ENCODE measurements at regions of chr4 and their contacts with region 1.

Region 1: DNA sequence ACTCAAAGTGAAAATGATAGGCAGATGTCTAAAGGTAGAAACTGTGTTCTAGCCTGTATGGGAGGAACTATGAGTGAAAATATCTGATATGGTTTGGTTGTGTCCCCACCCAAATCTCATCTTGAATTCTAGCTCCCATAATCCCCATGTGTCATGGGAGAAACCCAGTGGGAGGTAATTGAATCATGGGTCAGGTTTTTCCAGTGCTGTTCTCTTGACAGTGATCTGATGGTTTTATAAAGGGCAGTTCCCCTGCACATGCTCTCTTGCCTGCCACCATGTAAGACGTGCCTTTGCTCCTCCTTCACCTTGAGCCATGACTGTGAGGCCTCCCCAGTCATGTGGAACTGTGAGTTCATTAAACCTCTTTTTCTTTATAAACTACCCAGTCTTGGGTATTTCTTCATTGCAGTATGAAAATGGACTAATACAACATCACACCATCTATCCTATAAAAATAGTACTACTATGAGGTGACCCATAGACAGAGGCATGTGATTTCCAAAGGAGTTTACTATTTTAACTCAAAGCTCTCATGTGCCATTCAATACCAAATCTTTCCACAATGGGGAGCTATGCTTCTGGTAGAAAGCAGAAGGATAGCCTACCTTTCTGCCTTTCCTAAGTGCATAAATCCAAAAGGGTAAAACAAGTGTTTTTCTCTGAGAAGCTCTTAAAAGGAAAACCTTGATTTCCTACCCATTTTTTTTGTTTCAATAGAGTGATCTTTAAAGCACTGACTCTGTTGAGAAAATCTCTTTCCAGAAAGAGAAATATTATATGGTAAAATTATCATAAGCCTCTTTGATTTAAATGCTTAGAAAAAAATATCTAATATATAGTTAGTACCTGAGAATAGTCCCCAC is 38.8 kb downstream of the SEC31A start:
- DNase-seq: peak in 1 of 2 experiments; percentile 46
- ATAC-seq: peak; percentile 71 to 72; a peak in 5 of 6 replicates
- H3K4me3 ChIP-seq: no peak overlapping the region
- H3K27ac ChIP-seq: no peak overlapping the region
- H3K4me1 ChIP-seq: no peaks in the 10 kb centered on the region
- CTCF ChIP-seq: peak; percentile 31
- EP300 ChIP-seq: no peak
- POLR2A ChIP-seq: no peak
- RAD21 ChIP-seq: peak in 1 of 2 experiments; percentile 42; a peak in 3 of 5 replicates

Region 2: DNA sequence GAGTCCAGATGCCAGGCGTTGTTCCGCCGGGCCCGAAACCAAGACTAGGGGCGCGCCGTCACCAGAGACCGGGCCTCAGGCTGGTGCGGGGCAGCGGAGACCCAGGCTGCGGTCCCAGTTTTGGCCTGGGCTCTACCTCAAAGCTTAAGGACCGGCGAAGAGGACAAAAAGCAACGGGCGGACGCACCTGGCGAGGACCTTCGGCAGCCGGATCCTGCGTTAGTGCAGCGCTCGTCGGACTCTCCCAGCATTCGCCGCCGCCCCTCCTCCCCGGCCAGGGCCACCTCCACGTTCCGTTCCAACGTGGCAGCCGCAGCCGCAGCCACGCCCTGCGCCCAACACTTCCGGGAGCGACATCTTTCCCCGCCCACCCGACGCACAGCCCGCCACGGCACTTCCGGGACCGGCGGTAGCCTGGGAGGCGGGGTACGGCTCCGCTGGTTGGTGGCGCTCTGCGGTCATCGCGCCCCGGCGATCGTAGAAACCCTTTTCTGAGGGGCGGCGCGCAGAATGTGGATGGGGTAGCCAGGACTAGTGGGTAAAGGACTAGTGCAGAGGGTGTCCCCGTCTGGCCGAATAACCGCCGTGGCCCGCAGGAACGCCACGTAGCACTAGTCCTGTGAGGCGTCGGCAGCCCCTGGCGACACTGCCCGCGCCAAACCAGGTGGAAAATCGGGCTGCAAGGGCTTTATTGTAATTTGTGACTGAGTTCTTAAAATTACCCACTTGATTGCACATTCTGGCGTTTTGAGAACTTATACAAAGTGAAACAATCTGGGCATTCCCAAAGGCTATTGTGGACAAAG is 39.0 kb after region 1 on chr4 and contains the start of gene SEC31A:
- CTCF ChIA-PET with region 1: interaction called, 13 read pairs
- POLR2A ChIA-PET with region 1: no interaction called
- DNase-seq: peak; percentile 59 to 92
- ATAC-seq: peak; percentile 95 to 97
- H3K4me3 ChIP-seq: peak within 1 kb of the TSS; percentile 61
- H3K27ac ChIP-seq: peak within 1 kb of the TSS; percentile 89 to 96
- H3K4me1 ChIP-seq: peaks cover 31% of the 10 kb centered on the region
- CTCF ChIP-seq: no peak
- EP300 ChIP-seq: no peak
- POLR2A ChIP-seq: peak; percentile 65
- RAD21 ChIP-seq: no peak
- polyA plus RNA-seq, gene SEC31A: 117 and 127 TPM in 2 replicates

Region 3: GRCh38 chr4:83716874-83717273 is 864.8 kb after region 1 on chr4:
- CTCF ChIA-PET with region 1: no interaction called
- POLR2A ChIA-PET with region 1: no interaction called
- DNase-seq: no peak
- ATAC-seq: no peak
- H3K4me3 ChIP-seq: no peak overlapping the region
- H3K27ac ChIP-seq: no peak overlapping the region
- H3K4me1 ChIP-seq: no peaks in the 10 kb centered on the region
- CTCF ChIP-seq: no peak
- EP300 ChIP-seq: no peak
- POLR2A ChIP-seq: no peak
- RAD21 ChIP-seq: no peak